ENCODE measurements at regions of chr16 and their contacts with region 1.

Region 1: GRCh38 chr16:8621572-8622314 is at the start of gene METTL22:
- DNase-seq: peak; percentile 74 to 88
- ATAC-seq: peak; percentile 89 to 93
- H3K4me3 ChIP-seq: peak within 1 kb of the TSS; percentile 90 to 96 (median 94)
- H3K27ac ChIP-seq: peak within 1 kb of the TSS; percentile 91 to 96 (median 94)
- H3K4me1 ChIP-seq: peaks cover 18 to 27% of the 10 kb centered on the region in 2 donors
- H3K27me3 ChIP-seq: peaks cover 0 to 3% (median 0%) of the 10 kb centered on the region in 3 donors
- CTCF ChIP-seq: no peak
- POLR2A ChIP-seq: peak; percentile 69 to 80
- total RNA-seq, gene METTL22: 28.8 to 71.5 (median 51.5) TPM

Region 2: GRCh38 chr16:8567750-8568617 is 53.8 kb before region 1 on chr16:
- in situ Hi-C with region 1: no loop called
- intact Hi-C with region 1: loop called (anchors 5 kb)
- DNase-seq: peak; percentile 29 to 43
- ATAC-seq: peak; percentile 81 to 93
- H3K4me3 ChIP-seq: no peak overlapping the region
- H3K27ac ChIP-seq: no peak overlapping the region
- H3K4me1 ChIP-seq: no peaks in the 10 kb centered on the region
- H3K27me3 ChIP-seq: peaks cover 0 to 16% (median 7%) of the 10 kb centered on the region in 3 donors
- CTCF ChIP-seq: peak; percentile 88 to 95 (median 91)
- POLR2A ChIP-seq: no peak

Region 3: GRCh38 chr16:8797364-8798173 is 175.8 kb after region 1 on chr16 and contains the starts of genes PMM2 and TMEM186:
- in situ Hi-C with region 1: no loop called
- intact Hi-C with region 1: loop called (anchors 2 kb)
- DNase-seq: peak; percentile 95 to 96
- ATAC-seq: peak; percentile 98 to 99
- H3K4me3 ChIP-seq: peak within 1 kb of the TSS; percentile 92 to 100 (median 96)
- H3K27ac ChIP-seq: peak within 1 kb of the TSS; percentile 84 to 98 (median 92)
- H3K4me1 ChIP-seq: peaks cover 26% of the 10 kb centered on the region in 2 donors
- H3K27me3 ChIP-seq: no peaks in the 10 kb centered on the region
- CTCF ChIP-seq: peak in 3 of 5 experiments; percentile 15 to 26 (median 16)
- POLR2A ChIP-seq: peak; percentile 23 to 67
- total RNA-seq, gene PMM2: 10.4 to 20.9 (median 16.6) TPM
- total RNA-seq, gene TMEM186: 10.2 to 16.9 (median 11.9) TPM

Measured in gastrocnemius medialis (tissue), 4 donors.